Activated B cell treated with CpG ODN at 0.5 μM for 24 hours (primary cell): ENCODE measurements at regions of chr7 and their contacts with region 1.

Region 1: GRCh38 chr7:24381894-24382505 is 98.0 kb downstream of the NPY start:
- DNase-seq: no peak
- ATAC-seq: no peak
- H3K4me3 Mint-ChIP-seq: no peak overlapping the region
- H3K27ac Mint-ChIP-seq: no peak overlapping the region
- H3K4me1 Mint-ChIP-seq: no peaks in the 10 kb centered on the region
- H3K27me3 Mint-ChIP-seq: peaks cover 2% of the 10 kb centered on the region
- CTCF ChIP-seq: no peak

Region 2: GRCh38 chr7:23863209-23863798 is 518.7 kb before region 1 on chr7:
- CTCF ChIA-PET with region 1: no interaction called
- POLR2A ChIA-PET with region 1: no interaction called
- intact Hi-C with region 1: loop called (anchors 2 kb)
- DNase-seq: no peak
- ATAC-seq: no peak
- H3K4me3 Mint-ChIP-seq: no peak overlapping the region
- H3K27ac Mint-ChIP-seq: no peak overlapping the region
- H3K4me1 Mint-ChIP-seq: no peaks in the 10 kb centered on the region
- H3K27me3 Mint-ChIP-seq: peaks cover 2% of the 10 kb centered on the region
- CTCF ChIP-seq: no peak

Region 3: GRCh38 chr7:24290004-24290641 is 91.9 kb before region 1 on chr7:
- CTCF ChIA-PET with region 1: interaction called, 7 read pairs
- POLR2A ChIA-PET with region 1: no interaction called
- intact Hi-C with region 1: loop called (anchors 1 kb)
- DNase-seq: no peak
- ATAC-seq: peak; percentile 90
- H3K4me3 Mint-ChIP-seq: no peak overlapping the region
- H3K27ac Mint-ChIP-seq: no peak overlapping the region
- H3K4me1 Mint-ChIP-seq: peaks cover 13% of the 10 kb centered on the region
- H3K27me3 Mint-ChIP-seq: peaks cover 34% of the 10 kb centered on the region
- CTCF ChIP-seq: no peak

Region 4: DNA sequence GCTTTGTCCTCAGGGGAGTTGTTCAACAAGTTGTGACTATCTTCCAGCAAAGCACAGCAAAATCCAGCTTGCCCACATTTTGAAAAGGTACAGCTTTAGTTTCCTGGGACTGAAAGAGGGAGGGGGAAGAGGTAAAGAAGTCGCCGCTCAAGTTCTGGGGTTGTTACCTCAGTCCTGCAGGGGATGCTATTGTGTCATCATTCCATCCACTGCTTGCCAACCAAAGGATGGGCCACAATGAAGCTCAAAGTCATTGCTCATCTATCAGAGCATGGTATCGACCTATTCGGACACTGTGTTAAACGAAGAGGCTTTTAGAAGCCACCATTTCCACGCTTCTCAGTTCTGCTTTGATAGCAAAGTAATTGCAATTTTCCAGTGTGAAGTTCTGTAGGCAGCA is 63.7 kb before region 1 on chr7:
- CTCF ChIA-PET with region 1: interaction called, 7 read pairs
- POLR2A ChIA-PET with region 1: no interaction called
- intact Hi-C with region 1: loop called (anchors 1 kb)
- DNase-seq: no peak
- ATAC-seq: no peak
- H3K4me3 Mint-ChIP-seq: no peak overlapping the region
- H3K27ac Mint-ChIP-seq: no peak overlapping the region
- H3K4me1 Mint-ChIP-seq: no peaks in the 10 kb centered on the region
- H3K27me3 Mint-ChIP-seq: peaks cover 7% of the 10 kb centered on the region
- CTCF ChIP-seq: no peak